Activated T-helper 1 cell treated with anti-CD3 and anti-CD28 coated beads, Interleukin-12 subunit alpha, Interleukin-12 subunit beta, Interleukin-2, Interleukin-4 antibody, amounts not matched to agents 30 ng/mL and 10 ng/mL and 1 ng/mL, durations not matched to agents 14 hours and 24 hours and 36 hours (primary cell): ENCODE measurements at regions of chr5 and their contacts with region 1.

Region 1: DNA sequence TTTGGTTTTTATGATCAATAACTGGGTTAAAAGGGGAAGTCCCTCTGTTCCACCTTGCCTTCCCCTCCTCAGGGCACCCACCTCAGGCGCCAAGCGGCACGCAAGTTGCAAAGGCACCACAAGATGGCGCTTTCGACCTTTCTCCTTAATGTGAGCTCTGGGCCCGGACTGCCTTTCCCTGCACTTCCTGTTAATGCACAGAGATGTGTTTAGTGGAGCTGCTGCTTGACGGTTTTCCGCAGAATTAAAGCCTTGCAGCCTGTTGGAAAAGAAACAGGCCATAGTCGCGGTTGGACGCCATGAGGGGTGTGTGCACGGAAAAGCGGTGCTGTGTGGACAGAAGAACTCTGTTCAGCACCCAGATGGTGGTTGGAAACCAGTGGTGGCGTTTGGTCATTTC is 17.9 kb downstream of the CXCL14 start:
- DNase-seq: peak; percentile 44
- H3K4me3 Mint-ChIP-seq: no peak overlapping the region
- H3K27ac Mint-ChIP-seq: no peak overlapping the region
- H3K4me1 Mint-ChIP-seq: peaks cover 7% of the 10 kb centered on the region
- H3K27me3 Mint-ChIP-seq: peaks cover 15% of the 10 kb centered on the region

Region 2: GRCh38 chr5:135829681-135830383 is 269.0 kb after region 1 on chr5:
- intact Hi-C with region 1: loop called (anchors 1 kb)
- DNase-seq: peak; percentile 8
- H3K4me3 Mint-ChIP-seq: no peak overlapping the region
- H3K27ac Mint-ChIP-seq: no peak overlapping the region
- H3K4me1 Mint-ChIP-seq: peaks cover 5% of the 10 kb centered on the region
- H3K27me3 Mint-ChIP-seq: peaks cover 18% of the 10 kb centered on the region